ENCODE measurements at regions of chr2 and their contacts with region 1.

Region 1: DNA sequence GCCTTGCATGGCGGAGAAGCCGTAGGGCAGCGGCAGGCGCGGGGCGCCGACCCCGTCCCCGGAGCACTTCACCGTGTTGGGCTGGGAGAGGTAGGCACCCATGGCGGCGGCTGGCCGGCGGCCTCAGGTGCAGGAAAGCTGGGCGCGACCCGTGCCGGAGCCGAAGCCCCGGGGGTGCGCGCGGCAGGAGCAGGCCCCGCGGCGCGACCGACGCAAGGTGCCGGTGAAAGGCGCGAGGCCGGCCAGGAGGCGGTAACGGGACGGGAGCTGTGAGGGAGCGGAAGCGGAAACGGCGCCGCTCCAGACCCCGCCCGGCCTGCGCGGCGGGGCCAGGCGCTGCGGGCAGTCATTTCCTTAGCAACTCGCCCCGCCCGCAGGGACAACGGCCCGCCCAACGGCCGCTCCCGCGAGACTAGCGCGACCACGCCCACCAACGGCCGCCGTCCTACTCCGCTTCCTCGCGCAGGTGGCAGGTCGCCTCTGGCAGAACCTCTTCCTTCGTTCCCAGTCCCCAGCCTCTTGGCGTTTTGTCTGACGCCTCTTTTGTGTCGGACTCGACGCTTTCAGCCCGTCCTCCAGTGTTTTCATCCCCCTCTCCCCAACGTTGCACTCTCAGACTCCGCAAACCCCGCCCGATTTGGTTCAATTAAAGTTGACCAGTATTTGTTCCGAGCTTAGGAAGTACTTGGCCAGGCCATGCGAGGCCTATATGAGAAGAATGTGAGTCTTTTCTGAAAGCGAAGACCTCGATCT is at the start of gene PPM1G:
- DNase-seq: peak; percentile 59
- H3K4me3 ChIP-seq: peak within 1 kb of the TSS; percentile 89
- H3K27ac ChIP-seq: peak within 1 kb of the TSS; percentile 31
- H3K27me3 ChIP-seq: peaks cover 3% of the 10 kb centered on the region
- CTCF ChIP-seq: no peak
- polyA plus RNA-seq, gene PPM1G: 48.6 and 49.5 TPM in 2 replicates

Region 2: GRCh38 chr2:27428213-27428977 is 18.9 kb after region 1 on chr2 and contains the start of gene NRBP1:
- CTCF ChIA-PET with region 1: interaction called, 12 read pairs
- POLR2A ChIA-PET with region 1: interaction called, 43 read pairs
- DNase-seq: peak; percentile 68
- H3K4me3 ChIP-seq: peak within 1 kb of the TSS; percentile 80
- H3K27ac ChIP-seq: peak within 1 kb of the TSS; percentile 89
- H3K27me3 ChIP-seq: no peaks in the 10 kb centered on the region
- CTCF ChIP-seq: no peak
- polyA plus RNA-seq, gene NRBP1: 181 and 182 TPM in 2 replicates

Region 3: GRCh38 chr2:27628767-27629709 is 219.5 kb after region 1 on chr2 and contains the starts of genes CCDC121 and GPN1:
- CTCF ChIA-PET with region 1: no interaction called
- POLR2A ChIA-PET with region 1: interaction called, 10 read pairs
- DNase-seq: peak; percentile 77
- H3K4me3 ChIP-seq: peak within 1 kb of the TSS; percentile 97
- H3K27ac ChIP-seq: peak within 1 kb of the TSS; percentile 89
- H3K27me3 ChIP-seq: no peaks in the 10 kb centered on the region
- CTCF ChIP-seq: no peak
- polyA plus RNA-seq, gene CCDC121: 1.7 and 1.8 TPM in 2 replicates
- polyA plus RNA-seq, gene GPN1: 63.9 and 73.6 TPM in 2 replicates

Region 4: GRCh38 chr2:27765621-27766269 is 356.2 kb after region 1 on chr2:
- CTCF ChIA-PET with region 1: no interaction called
- POLR2A ChIA-PET with region 1: no interaction called
- DNase-seq: no peak
- H3K4me3 ChIP-seq: no peak overlapping the region
- H3K27ac ChIP-seq: no peak overlapping the region
- H3K27me3 ChIP-seq: no peaks in the 10 kb centered on the region
- CTCF ChIP-seq: no peak